GM12878 (cell line): ENCODE measurements at regions of chr6 and their contacts with region 1.

Region 1: GRCh38 chr6:6610031-6610591 is 21.6 kb downstream of the LY86 start:
- DNase-seq: peak; percentile 71
- ATAC-seq: peak; percentile 97
- H3K4me3 ChIP-seq: peak overlapping the region; percentile 39; the same call in 1 of the 2 replicates
- H3K27ac ChIP-seq: peak overlapping the region; percentile 77
- H3K4me1 ChIP-seq: peaks cover 21% of the 10 kb centered on the region
- H3K27me3 ChIP-seq: no peaks in the 10 kb centered on the region
- CTCF ChIP-seq: no peak
- EP300 ChIP-seq: no peak
- POLR2A ChIP-seq: no peak
- RAD21 ChIP-seq: no peak

Region 2: GRCh38 chr6:6599468-6599873 is 10.6 kb before region 1 on chr6:
- CTCF ChIA-PET with region 1: interaction called, 7 read pairs
- POLR2A ChIA-PET with region 1: interaction called, 5 read pairs
- RAD21 ChIA-PET with region 1: interaction called, 6 read pairs
- SMC1A ChIA-PET with region 1: interaction called, 21 read pairs
- in situ Hi-C with region 1: no loop called
- intact Hi-C with region 1: no loop called
- DNase-seq: no peak
- ATAC-seq: no peak
- H3K4me3 ChIP-seq: no peak overlapping the region
- H3K27ac ChIP-seq: no peak overlapping the region
- H3K4me1 ChIP-seq: no peaks in the 10 kb centered on the region; the same call in 1 of the 2 replicates
- H3K27me3 ChIP-seq: no peaks in the 10 kb centered on the region
- CTCF ChIP-seq: no peak
- EP300 ChIP-seq: no peak
- POLR2A ChIP-seq: no peak
- RAD21 ChIP-seq: no peak

Region 3: GRCh38 chr6:6635869-6636268 is 25.8 kb after region 1 on chr6:
- CTCF ChIA-PET with region 1: no interaction called
- POLR2A ChIA-PET with region 1: interaction called, 3 read pairs
- RAD21 ChIA-PET with region 1: interaction called, 3 read pairs
- SMC1A ChIA-PET with region 1: interaction called, 10 read pairs
- in situ Hi-C with region 1: no loop called
- intact Hi-C with region 1: no loop called
- DNase-seq: peak; percentile 43
- ATAC-seq: peak; percentile 79
- H3K4me3 ChIP-seq: 0 out of 2 replicates have a peak overlapping the region, but pooled peaks have one; percentile 18
- H3K27ac ChIP-seq: peak overlapping the region; percentile 57
- H3K4me1 ChIP-seq: peaks cover 30% of the 10 kb centered on the region
- H3K27me3 ChIP-seq: no peaks in the 10 kb centered on the region
- CTCF ChIP-seq: no peak
- EP300 ChIP-seq: 0 out of 4 replicates have a peak, but pooled peaks of 1 of the 2 experiments have one; percentile 15
- POLR2A ChIP-seq: no peak
- RAD21 ChIP-seq: no peak

Region 4: DNA sequence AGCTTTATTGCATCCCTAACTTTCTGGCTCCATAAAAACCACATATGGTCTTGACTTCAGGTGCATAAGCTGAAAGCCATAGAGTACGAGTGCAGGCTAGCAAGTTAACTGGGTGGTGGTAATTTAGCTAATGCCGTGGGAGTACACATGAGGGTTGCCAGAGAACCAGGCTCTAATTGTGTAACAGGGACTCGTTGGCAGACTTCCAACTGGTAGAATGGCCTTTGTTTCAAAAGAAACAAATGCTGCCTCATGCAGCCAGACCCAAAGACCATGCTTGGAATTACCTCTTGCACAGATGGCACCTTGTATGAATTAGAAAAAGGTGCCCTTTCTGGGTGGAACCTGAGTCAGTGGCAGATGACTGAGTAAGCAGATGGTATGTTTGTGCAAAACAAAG is 51.6 kb after region 1 on chr6:
- CTCF ChIA-PET with region 1: no interaction called
- POLR2A ChIA-PET with region 1: interaction called, 4 read pairs
- RAD21 ChIA-PET with region 1: interaction called, 3 read pairs
- SMC1A ChIA-PET with region 1: interaction called, 18 read pairs
- in situ Hi-C with region 1: no loop called
- intact Hi-C with region 1: no loop called
- DNase-seq: no peak
- ATAC-seq: no peak
- H3K4me3 ChIP-seq: no peak overlapping the region
- H3K27ac ChIP-seq: no peak overlapping the region
- H3K4me1 ChIP-seq: peaks cover 24% of the 10 kb centered on the region
- H3K27me3 ChIP-seq: no peaks in the 10 kb centered on the region
- CTCF ChIP-seq: no peak
- EP300 ChIP-seq: no peak
- POLR2A ChIP-seq: no peak
- RAD21 ChIP-seq: no peak